ENCODE measurements at regions of chr22 and their contacts with region 1.

Region 1: DNA sequence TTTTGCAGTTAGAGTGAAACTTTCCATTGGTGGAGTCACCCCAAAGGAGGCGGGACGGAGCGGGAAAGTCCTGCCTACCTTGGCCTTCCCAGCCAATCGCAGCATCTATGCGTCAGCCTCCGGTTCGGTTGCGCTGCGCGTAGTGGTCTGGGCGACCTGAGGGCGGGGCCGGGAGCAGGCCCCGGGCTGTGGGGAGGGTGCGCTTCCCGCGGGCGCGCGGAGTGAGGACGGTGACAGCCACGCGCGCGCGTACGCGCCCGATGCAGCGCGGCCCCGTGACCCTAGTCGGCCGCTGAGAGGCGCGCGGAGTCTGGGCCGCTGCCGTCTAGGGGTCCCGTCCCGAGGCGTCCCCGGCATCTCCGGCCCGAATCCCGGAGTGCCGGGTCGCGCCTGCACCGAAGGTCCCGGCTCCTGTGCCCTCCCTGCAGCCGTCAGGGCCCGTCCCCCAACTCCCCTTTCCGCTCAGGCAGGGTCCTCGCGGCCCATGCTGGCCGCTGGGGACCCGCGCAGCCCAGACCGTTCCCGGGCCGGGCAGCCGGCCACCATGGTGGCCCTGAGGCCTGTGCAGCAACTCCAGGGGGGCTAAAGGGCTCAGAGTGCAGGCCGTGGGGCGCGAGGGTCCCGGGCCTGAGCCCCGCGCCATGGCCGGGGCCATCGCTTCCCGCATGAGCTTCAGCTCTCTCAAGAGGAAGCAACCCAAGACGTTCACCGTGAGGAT is at the start of gene NF2:
- DNase-seq: peak; percentile 99
- H3K4me3 Mint-ChIP-seq: peak within 1 kb of the TSS; percentile 78
- H3K27ac Mint-ChIP-seq: peak within 1 kb of the TSS; percentile 94
- H3K4me1 Mint-ChIP-seq: peaks cover 26% of the 10 kb centered on the region
- H3K27me3 Mint-ChIP-seq: no peaks in the 10 kb centered on the region
- total RNA-seq, gene NF2: 58.2 to 60.1 TPM

Region 2: DNA sequence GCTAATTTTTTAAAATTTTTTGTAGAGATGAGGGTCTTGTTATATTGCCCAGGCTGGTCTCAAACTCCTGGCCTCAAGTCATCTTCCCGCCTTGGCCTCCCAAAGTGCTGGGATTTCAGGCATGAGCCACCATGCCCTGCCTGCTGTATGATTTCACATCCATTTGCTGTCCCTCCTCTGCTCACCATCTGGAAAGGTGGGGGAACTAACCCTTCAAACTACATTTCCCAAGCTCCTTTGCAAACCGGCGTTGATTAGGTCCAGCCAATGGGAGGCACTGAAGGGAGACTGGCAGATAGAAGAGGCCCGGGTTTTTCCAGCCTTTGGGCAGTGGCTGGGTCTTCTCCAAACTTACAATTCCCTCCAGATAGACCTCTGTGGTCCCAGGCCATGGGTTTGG is 145.8 kb before region 1 on chr22:
- CTCF ChIA-PET with region 1: no interaction called
- POLR2A ChIA-PET with region 1: no interaction called
- DNase-seq: no peak
- H3K4me3 Mint-ChIP-seq: no peak overlapping the region
- H3K27ac Mint-ChIP-seq: no peak overlapping the region
- H3K4me1 Mint-ChIP-seq: no peaks in the 10 kb centered on the region
- H3K27me3 Mint-ChIP-seq: no peaks in the 10 kb centered on the region

Region 3: DNA sequence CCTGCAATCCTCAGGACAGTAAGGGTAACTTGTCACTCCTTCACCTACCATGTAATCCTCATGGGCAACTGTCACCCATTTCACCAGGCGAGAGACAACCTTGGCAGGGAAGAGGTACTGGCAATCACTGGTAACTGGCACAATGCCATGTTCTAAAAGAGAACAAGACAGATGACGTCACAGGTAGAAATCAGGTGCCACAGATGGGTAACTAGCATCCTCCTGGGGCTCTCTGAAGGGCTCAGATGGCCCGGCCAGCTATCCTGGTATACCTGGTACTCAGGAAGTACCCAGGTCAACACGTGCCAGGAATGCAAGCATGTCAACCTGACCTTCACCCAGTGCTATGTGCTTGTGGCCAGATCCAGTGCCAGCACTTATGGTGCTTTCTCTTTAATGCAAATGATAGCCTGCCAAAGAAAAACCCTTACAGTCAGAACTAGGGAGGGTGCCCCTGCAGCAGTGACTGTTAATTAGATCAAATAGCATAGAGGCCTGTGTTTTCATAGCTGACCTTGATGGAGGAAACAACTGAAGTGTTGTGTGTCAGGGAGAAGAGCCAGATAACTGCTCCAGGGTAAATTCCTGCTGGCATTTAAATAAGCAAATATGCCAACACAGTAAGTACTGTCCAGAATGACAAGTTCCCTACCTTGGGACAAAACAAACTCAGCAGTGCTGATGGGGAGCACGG is 86.2 kb before region 1 on chr22:
- CTCF ChIA-PET with region 1: no interaction called
- POLR2A ChIA-PET with region 1: no interaction called
- DNase-seq: no peak
- H3K4me3 Mint-ChIP-seq: no peak overlapping the region
- H3K27ac Mint-ChIP-seq: no peak overlapping the region
- H3K4me1 Mint-ChIP-seq: no peaks in the 10 kb centered on the region
- H3K27me3 Mint-ChIP-seq: no peaks in the 10 kb centered on the region

Region 4: GRCh38 chr22:29553351-29554224 is 49.9 kb before region 1 on chr22 and contains the start of gene THOC5:
- CTCF ChIA-PET with region 1: interaction called, 9 read pairs
- POLR2A ChIA-PET with region 1: interaction called, 24 read pairs
- DNase-seq: peak; percentile 92
- H3K4me3 Mint-ChIP-seq: peak within 1 kb of the TSS; percentile 94
- H3K27ac Mint-ChIP-seq: peak within 1 kb of the TSS; percentile 83
- H3K4me1 Mint-ChIP-seq: peaks cover 24% of the 10 kb centered on the region
- H3K27me3 Mint-ChIP-seq: no peaks in the 10 kb centered on the region
- total RNA-seq, gene THOC5: 41.6 to 56.2 TPM

Region 5: GRCh38 chr22:29587938-29588699 is 15.4 kb before region 1 on chr22:
- CTCF ChIA-PET with region 1: interaction called, 22 read pairs
- POLR2A ChIA-PET with region 1: interaction called, 9 read pairs
- DNase-seq: no peak
- H3K4me3 Mint-ChIP-seq: no peak overlapping the region
- H3K27ac Mint-ChIP-seq: no peak overlapping the region
- H3K4me1 Mint-ChIP-seq: peaks cover 10% of the 10 kb centered on the region
- H3K27me3 Mint-ChIP-seq: no peaks in the 10 kb centered on the region

Region 6: DNA sequence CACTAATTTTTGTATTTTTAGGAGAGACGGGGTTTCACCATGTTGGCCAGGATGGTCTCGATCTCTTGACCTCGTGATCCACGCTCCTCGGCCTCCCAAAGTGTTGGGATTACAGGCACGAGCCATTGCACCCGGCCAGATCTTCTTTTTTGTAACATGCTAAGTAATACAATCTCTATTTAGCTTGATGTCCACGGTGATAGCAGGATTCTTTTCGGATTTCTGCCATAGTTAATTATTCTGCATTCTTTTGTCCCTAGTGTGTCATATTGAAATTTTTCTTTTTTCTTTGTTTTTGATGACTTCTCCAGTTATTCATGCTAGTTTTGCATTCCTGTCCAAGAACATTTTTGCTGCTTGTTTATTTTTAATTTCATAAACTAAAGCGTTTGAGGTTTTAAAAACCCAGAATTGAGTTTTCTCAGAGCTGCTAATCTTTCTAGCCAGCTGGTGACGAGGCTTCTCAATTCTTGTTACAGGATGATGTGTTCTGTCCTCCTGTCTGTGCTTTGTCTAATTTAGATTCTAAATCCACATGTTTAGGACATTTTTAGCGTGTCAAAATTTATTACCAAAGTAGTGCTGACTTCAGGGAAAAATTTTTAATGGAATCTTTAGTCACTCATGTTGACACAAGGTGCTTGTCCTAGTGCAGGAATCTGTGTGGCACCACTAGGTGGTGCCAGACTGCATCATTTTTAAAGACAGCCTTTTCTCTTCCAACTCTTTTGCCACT is 21.7 kb after region 1 on chr22:
- CTCF ChIA-PET with region 1: interaction called, 26 read pairs
- POLR2A ChIA-PET with region 1: interaction called, 8 read pairs
- DNase-seq: peak; percentile 53
- H3K4me3 Mint-ChIP-seq: no peak overlapping the region
- H3K27ac Mint-ChIP-seq: peak overlapping the region; percentile 16
- H3K4me1 Mint-ChIP-seq: peaks cover 59% of the 10 kb centered on the region
- H3K27me3 Mint-ChIP-seq: no peaks in the 10 kb centered on the region